SK-N-SH (cell line): ENCODE measurements at regions of chr10 and their contacts with region 1.

Region 1: GRCh38 chr10:63976538-63976937 is 455.3 kb downstream of the REEP3 start:
- DNase-seq: peak; percentile 68
- H3K4me3 ChIP-seq: no peak overlapping the region
- H3K27ac ChIP-seq: no peak overlapping the region
- H3K4me1 ChIP-seq: no peaks in the 10 kb centered on the region
- H3K27me3 ChIP-seq: no peaks in the 10 kb centered on the region
- CTCF ChIP-seq: peak; percentile 70
- EP300 ChIP-seq: no peak
- RAD21 ChIP-seq: peak; percentile 76

Region 2: DNA sequence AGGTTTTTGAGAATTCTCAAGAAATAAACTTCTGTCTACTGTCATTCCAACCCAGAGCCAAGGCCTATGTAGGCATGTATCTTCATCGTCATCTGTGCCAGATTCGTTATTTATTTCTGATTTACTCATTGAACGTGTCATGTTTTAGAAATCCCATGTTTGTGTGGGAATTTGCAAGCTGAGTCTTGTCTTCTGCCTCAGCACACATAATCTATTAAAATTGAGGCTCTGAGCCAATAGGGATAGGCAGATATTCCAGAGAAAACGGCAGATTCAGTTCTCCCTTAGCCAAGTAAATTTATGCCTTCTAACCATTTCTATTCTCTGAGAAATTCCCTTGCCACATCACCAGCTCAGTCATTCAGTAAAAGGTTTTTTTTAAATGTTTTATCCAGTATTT is 10.7 kb before region 1 on chr10:
- CTCF ChIA-PET with region 1: interaction called, 18 read pairs
- POLR2A ChIA-PET with region 1: no interaction called
- DNase-seq: no peak
- H3K4me3 ChIP-seq: no peak overlapping the region
- H3K27ac ChIP-seq: no peak overlapping the region
- H3K4me1 ChIP-seq: no peaks in the 10 kb centered on the region
- H3K27me3 ChIP-seq: no peaks in the 10 kb centered on the region
- CTCF ChIP-seq: no peak
- EP300 ChIP-seq: no peak
- RAD21 ChIP-seq: no peak